ENCODE measurements at regions of chr9 and their contacts with region 1.

Region 1: GRCh38 chr9:123033864-123034601 is 566 bp downstream of the GPR21 start:
- DNase-seq: no peak
- H3K4me3 Mint-ChIP-seq: no peak overlapping the region
- H3K27ac Mint-ChIP-seq: peak overlapping the region; percentile 25
- H3K4me1 Mint-ChIP-seq: no peaks in the 10 kb centered on the region
- H3K27me3 Mint-ChIP-seq: no peaks in the 10 kb centered on the region
- CTCF ChIP-seq: no peak

Region 2: DNA sequence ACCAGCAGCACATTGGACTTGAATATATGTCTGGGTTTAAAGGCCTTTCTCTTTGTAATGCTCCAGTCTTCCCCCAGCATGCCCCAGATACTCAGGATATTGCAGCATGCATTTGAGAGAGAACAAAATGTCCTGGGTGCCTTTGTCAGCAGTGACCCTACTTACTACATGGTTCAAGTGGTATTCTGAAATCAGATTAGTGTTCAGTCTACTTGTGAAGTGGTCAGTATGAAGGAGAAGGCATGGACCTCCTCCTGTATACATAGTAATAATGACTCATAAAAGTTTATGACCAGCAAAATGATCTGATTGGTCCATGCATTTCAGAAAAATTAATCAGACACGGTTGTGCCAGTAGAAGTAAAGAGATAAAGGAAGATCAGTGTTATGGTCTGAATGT is 24.8 kb after region 1 on chr9:
- CTCF ChIA-PET with region 1: no interaction called
- intact Hi-C with region 1: loop called (anchors 1 kb)
- DNase-seq: no peak
- H3K4me3 Mint-ChIP-seq: no peak overlapping the region
- H3K27ac Mint-ChIP-seq: no peak overlapping the region
- H3K4me1 Mint-ChIP-seq: no peaks in the 10 kb centered on the region
- H3K27me3 Mint-ChIP-seq: no peaks in the 10 kb centered on the region
- CTCF ChIP-seq: no peak

Measured in Calu3 (cell line).